H1 (cell line): ENCODE measurements at regions of chr3 and their contacts with region 1.

Region 1: DNA sequence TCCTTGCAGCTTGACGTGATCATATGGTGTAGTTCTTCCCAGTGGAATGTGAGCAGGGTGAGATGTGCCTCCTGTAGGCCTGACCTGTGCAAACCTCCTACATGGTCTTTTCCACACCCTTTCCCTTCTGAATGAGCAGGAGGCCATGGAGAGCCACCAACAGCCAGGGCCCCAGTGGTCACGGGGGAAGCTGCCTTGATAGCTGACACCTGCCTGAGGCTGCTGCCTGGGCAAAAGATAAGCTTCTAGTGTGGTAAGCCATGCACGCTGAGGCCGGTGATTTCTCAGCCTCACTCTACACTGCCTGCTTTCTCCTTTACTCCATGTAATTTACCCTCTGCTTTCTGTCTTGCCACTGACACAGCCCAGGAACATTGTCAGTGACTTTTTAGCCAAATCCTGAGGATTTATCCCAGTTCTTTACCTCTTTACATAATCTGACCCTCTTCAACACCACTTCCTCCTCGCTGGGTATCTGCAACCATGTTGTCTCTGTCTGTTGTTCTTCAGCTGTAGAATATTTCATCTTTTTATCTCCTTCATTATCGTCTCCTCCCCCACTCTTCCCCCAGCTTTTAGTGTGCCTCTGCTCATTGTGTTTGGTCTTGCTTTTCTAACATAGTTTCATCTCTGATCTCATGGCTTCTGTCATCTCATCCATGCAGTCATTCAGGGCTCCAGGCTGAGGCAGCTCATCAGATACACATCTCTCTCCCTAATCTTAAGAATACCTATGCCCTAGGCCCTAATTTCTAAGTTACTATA is 11.2 kb upstream of the KBTBD12 start:
- DNase-seq: no peak
- H3K4me3 ChIP-seq: no peak overlapping the region
- H3K27ac ChIP-seq: no peak overlapping the region
- H3K4me1 ChIP-seq: no peaks in the 10 kb centered on the region
- H3K27me3 ChIP-seq: no peaks in the 10 kb centered on the region
- CTCF ChIP-seq: no peak
- EP300 ChIP-seq: no peak
- POLR2A ChIP-seq: no peak
- RAD21 ChIP-seq: no peak

Region 2: GRCh38 chr3:127889461-127889863 is 14.3 kb before region 1 on chr3:
- CTCF ChIA-PET with region 1: interaction called, 14 read pairs
- POLR2A ChIA-PET with region 1: no interaction called
- DNase-seq: no peak
- H3K4me3 ChIP-seq: no peak overlapping the region
- H3K27ac ChIP-seq: no peak overlapping the region
- H3K4me1 ChIP-seq: peaks cover 0 to 5% (median 1%) of the 10 kb centered on the region in 4 experiments; a peak in 3 of 7 replicates
- H3K27me3 ChIP-seq: no peaks in the 10 kb centered on the region; a peak in 1 of 7 replicates
- CTCF ChIP-seq: no peak
- EP300 ChIP-seq: no peak
- POLR2A ChIP-seq: no peak
- RAD21 ChIP-seq: no peak

Region 3: DNA sequence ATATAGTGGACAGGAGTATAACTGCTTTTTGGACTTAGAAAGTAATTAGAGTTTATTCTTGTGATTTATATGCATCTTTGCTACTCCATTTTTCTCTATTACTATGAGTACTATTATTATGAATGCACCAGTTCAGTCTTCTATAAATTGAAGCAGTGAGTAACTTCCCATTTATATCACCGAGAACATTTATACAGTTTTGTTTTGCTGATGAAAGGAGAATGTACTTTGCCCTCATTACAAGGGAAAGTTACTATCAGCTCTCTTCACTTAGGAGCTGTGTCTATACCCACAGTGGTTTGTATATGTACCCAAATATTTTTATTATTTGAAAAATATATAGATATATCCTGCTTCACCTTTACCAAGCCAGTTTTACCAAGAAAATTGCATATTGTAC is 16.9 kb after region 1 on chr3:
- CTCF ChIA-PET with region 1: no interaction called
- POLR2A ChIA-PET with region 1: no interaction called
- DNase-seq: no peak
- H3K4me3 ChIP-seq: no peak overlapping the region
- H3K27ac ChIP-seq: no peak overlapping the region
- H3K4me1 ChIP-seq: no peaks in the 10 kb centered on the region; a peak in 1 of 7 replicates
- H3K27me3 ChIP-seq: peaks cover 0 to 13% (median 6%) of the 10 kb centered on the region in 4 experiments; a peak in 6 of 7 replicates
- CTCF ChIP-seq: no peak
- EP300 ChIP-seq: no peak
- POLR2A ChIP-seq: no peak
- RAD21 ChIP-seq: no peak